ENCODE measurements at regions of chr5 and their contacts with region 1.

Region 1: GRCh38 chr5:143824851-143825720 is 13.1 kb downstream of the HMHB1 start:
- DNase-seq: peak; percentile 71
- H3K4me3 Mint-ChIP-seq: no peak overlapping the region
- H3K27ac Mint-ChIP-seq: no peak overlapping the region
- H3K4me1 Mint-ChIP-seq: peaks cover 11% of the 10 kb centered on the region
- H3K27me3 Mint-ChIP-seq: no peaks in the 10 kb centered on the region

Region 2: DNA sequence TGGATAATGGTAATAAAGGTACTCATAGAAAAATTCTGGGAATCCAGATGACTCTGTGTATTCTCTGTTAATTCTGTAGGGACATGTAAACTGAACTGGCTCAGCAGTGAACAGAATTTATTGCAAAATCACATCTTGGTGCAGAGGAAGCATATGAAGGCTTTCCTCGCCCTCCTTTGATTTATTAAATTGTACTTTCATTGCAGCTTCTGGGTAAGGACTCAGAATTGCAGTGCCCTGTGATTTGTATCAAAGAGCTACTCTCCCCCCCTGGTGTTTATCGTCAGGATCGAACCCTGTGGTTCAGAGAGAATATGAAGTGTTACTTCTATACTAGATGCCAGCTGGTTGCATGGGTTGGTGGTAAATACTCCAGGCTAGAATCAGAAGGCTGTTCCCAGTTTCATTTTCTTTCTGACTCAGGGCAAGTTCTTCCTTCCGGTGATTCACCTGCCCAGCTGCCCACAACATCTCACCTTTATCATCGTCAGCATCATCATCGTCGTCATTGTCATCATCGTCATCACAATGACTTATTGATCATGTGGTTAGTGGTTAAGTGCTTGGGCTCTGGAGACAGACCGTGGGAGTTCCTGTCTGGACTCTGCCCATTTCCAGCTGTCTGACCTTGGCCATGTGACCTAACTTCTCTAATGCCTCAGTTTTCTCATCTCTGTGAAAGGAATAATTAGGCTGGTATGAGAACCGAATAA is 816.1 kb before region 1 on chr5:
- intact Hi-C with region 1: loop called (anchors 1 kb)
- DNase-seq: peak; percentile 82
- H3K4me3 Mint-ChIP-seq: peak overlapping the region; percentile 9
- H3K27ac Mint-ChIP-seq: peak overlapping the region; percentile 80
- H3K4me1 Mint-ChIP-seq: peaks cover 76% of the 10 kb centered on the region
- H3K27me3 Mint-ChIP-seq: no peaks in the 10 kb centered on the region

Region 3: GRCh38 chr5:143094087-143094521 is 731.0 kb before region 1 on chr5:
- intact Hi-C with region 1: no loop called
- DNase-seq: no peak
- H3K4me3 Mint-ChIP-seq: peak overlapping the region; percentile 9
- H3K27ac Mint-ChIP-seq: peak overlapping the region; percentile 79
- H3K4me1 Mint-ChIP-seq: peaks cover 29% of the 10 kb centered on the region
- H3K27me3 Mint-ChIP-seq: no peaks in the 10 kb centered on the region

Region 4: GRCh38 chr5:143153332-143154119 is 671.6 kb before region 1 on chr5:
- intact Hi-C with region 1: no loop called
- DNase-seq: no peak
- H3K4me3 Mint-ChIP-seq: no peak overlapping the region
- H3K27ac Mint-ChIP-seq: no peak overlapping the region
- H3K4me1 Mint-ChIP-seq: peaks cover 8% of the 10 kb centered on the region
- H3K27me3 Mint-ChIP-seq: no peaks in the 10 kb centered on the region

Region 5: DNA sequence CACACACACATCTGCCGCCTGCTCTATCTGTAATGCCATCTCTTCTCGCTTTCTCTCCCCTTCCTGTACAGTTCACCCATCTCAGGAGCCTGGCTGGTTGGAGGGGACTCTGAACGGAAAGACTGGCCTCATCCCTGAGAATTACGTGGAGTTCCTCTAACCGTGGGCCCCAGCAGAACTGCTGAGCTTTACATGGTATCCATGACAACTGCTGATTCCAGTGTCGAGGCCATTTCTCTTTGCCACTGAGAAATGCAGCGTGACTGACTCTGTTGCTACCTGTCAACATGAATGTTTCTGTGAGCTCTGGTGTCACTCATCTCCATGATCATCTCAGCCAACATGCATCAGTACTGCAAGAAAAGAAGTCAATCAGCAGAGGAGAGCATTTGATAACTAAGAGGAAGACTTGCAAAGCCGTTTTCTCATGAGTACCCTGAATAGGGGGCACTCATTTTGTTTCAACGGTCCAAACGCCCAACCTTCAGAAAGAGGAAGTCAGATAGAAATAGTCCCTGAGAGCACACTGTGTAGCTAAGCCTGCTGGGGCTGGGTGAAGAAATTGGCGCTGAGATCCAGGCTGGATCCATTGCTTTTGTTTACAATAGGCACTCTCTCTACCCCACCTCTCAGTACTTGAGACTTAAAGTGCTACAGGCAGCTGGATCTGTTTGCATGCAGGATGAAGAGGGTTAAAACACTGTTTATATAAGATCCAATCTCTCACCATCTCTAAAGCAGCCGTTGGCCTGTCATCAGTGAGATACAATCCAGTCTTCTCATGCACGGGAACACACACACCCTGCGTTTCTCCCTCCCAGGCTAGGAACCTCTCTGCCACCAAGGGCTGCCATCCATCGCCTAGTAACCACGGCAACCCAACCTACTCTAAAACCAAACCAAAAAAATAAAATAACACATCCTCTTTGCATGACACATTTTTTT is 602.5 kb before region 1 on chr5:
- intact Hi-C with region 1: loop called (anchors 1 kb)
- DNase-seq: peak; percentile 74
- H3K4me3 Mint-ChIP-seq: peak overlapping the region; percentile 43
- H3K27ac Mint-ChIP-seq: peak overlapping the region; percentile 97
- H3K4me1 Mint-ChIP-seq: peaks cover 82% of the 10 kb centered on the region
- H3K27me3 Mint-ChIP-seq: no peaks in the 10 kb centered on the region

Region 6: DNA sequence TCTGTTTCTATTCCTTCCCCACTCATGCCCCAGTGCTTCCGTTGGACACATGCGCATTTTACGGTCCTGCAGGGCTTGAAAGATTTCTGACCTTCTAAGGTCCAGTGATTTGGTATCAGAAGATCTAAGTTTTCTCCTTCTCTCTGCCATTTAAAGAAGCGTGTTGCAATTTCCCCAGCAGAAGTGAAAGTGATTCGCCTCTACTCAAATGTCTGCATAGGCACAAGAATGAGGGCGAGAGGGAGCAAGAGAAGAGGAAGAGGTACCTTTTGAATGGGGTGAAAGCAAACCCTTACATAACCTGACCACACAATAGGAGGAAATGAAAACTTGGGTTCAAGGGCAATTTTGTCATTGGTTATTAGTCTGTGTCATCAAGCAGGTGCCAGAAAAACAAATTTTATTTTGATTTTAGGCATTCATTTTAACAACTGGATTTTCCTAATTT is 389.9 kb before region 1 on chr5:
- intact Hi-C with region 1: loop called (anchors 10 kb)
- DNase-seq: no peak
- H3K4me3 Mint-ChIP-seq: peak overlapping the region; percentile 80
- H3K27ac Mint-ChIP-seq: peak overlapping the region; percentile 89
- H3K4me1 Mint-ChIP-seq: peaks cover 60% of the 10 kb centered on the region
- H3K27me3 Mint-ChIP-seq: no peaks in the 10 kb centered on the region

Region 7: GRCh38 chr5:143652108-143652700 is 172.9 kb before region 1 on chr5:
- intact Hi-C with region 1: loop called (anchors 1 kb)
- DNase-seq: no peak
- H3K4me3 Mint-ChIP-seq: no peak overlapping the region
- H3K27ac Mint-ChIP-seq: no peak overlapping the region
- H3K4me1 Mint-ChIP-seq: peaks cover 21% of the 10 kb centered on the region
- H3K27me3 Mint-ChIP-seq: peaks cover 2% of the 10 kb centered on the region

Region 8: GRCh38 chr5:143837306-143837848 is 12.3 kb after region 1 on chr5:
- intact Hi-C with region 1: no loop called
- DNase-seq: no peak
- H3K4me3 Mint-ChIP-seq: no peak overlapping the region
- H3K27ac Mint-ChIP-seq: no peak overlapping the region
- H3K4me1 Mint-ChIP-seq: peaks cover 3% of the 10 kb centered on the region
- H3K27me3 Mint-ChIP-seq: peaks cover 15% of the 10 kb centered on the region

Region 9: DNA sequence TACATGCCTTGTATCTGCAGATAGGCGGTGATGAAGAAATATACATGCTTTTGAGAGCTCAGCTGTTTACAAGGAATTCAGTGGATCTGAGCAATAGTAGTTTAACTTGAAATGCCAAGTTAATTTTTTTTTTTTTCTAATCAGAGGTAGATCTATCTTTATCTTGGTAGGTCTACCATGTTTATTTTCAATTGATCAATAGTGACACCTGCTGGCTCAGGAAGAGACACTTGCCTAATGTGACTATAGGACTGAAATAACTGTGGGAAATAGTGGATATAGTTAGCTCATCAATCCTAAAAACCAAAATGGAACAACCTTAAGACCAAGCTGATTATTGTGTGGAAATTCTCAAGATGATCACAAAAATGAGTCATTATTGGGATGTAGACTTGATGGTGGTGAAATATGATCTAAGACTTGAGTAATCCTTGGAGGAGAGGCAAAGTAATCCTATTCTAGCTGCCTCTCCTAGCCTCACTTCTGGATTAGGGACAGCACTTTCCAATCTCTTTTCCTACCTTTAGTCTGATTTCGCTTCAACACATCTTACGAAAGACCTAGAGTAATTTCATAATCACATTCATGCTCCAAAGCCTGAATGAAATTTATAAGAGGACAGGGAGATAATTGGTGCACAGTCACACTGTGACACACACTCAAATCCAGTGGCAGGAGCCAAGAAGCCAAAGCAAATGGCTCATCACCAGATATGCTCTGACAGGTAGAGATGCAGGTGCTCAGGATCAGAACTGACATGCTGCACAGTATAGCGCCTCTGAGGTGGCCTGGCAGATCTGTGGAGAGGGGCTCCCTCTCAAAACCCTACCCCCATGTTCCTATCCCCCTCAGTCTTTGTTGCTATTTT is 143.2 kb after region 1 on chr5:
- intact Hi-C with region 1: loop called (anchors 1 kb)
- DNase-seq: no peak
- H3K4me3 Mint-ChIP-seq: no peak overlapping the region
- H3K27ac Mint-ChIP-seq: no peak overlapping the region
- H3K4me1 Mint-ChIP-seq: peaks cover 2% of the 10 kb centered on the region
- H3K27me3 Mint-ChIP-seq: peaks cover 30% of the 10 kb centered on the region